IMR-90 (cell line): ENCODE measurements at regions of chr1 and their contacts with region 1.

Region 1: GRCh38 chr1:18085387-18086074 is 22.1 kb upstream of the IGSF21 start:
- DNase-seq: no peak
- ATAC-seq: no peak
- H3K4me3 ChIP-seq: no peak overlapping the region
- H3K27ac ChIP-seq: no peak overlapping the region
- H3K4me1 ChIP-seq: no peaks in the 10 kb centered on the region
- H3K27me3 ChIP-seq: no peaks in the 10 kb centered on the region
- CTCF ChIP-seq: no peak
- POLR2A ChIP-seq: no peak
- RAD21 ChIP-seq: no peak

Region 2: DNA sequence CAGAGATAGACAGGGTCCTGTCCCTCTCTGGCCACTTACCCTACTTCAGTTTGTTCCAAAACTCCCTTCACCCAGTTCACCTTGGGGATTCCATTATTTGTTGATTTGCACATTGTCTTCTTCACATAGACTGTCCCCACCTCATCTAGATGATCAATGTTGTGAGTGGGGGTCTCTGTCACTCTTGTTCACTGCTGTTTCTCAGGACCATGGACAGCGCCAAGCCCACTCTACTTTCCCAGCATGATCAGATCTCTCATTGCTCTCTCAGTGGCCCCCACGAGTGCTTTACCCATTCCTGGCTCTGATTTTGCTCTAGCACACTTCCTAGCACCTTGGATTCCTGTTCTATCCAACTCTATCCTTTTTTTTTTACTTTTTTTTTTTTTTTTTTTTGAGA is 23.4 kb before region 1 on chr1:
- CTCF ChIA-PET with region 1: interaction called, 10 read pairs
- POLR2A ChIA-PET with region 1: no interaction called
- dilution Hi-C with region 1: no loop called
- in situ Hi-C with region 1: no loop called
- intact Hi-C with region 1: no loop called
- DNase-seq: no peak
- ATAC-seq: no peak
- H3K4me3 ChIP-seq: no peak overlapping the region
- H3K27ac ChIP-seq: no peak overlapping the region
- H3K4me1 ChIP-seq: no peaks in the 10 kb centered on the region
- H3K27me3 ChIP-seq: no peaks in the 10 kb centered on the region
- CTCF ChIP-seq: no peak
- POLR2A ChIP-seq: no peak
- RAD21 ChIP-seq: no peak